ENCODE measurements at regions of chr1 and their contacts with region 1.

Region 1: DNA sequence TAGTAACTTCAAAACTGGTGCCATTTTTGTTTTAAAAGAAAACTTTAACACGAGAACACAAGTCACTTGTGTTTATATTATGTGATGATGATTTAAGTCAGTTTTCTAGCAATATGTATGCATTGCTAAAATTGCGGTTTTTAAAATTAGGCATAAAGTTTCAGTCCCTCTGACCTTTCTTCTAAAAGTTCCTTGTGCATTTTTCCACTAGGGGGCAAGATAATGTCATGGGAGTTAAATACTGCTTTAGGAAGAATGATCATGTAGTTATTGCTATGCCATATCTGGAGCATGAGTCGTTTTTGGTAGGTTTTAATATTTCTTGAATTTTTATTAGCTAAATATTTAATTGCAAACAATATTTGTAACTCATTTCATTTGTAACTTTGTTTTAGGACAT is 10.7 kb downstream of the CDC7 start:
- DNase-seq: no peak
- ATAC-seq: peak in 2 of 4 donors; percentile 46 to 72
- H3K4me3 ChIP-seq: no peak overlapping the region
- H3K27ac ChIP-seq: no peak overlapping the region
- H3K4me1 ChIP-seq: no peaks in the 10 kb centered on the region
- H3K27me3 ChIP-seq: no peaks in the 10 kb centered on the region
- CTCF ChIP-seq: peak; percentile 72

Region 2: GRCh38 chr1:91929250-91929649 is 417.9 kb after region 1 on chr1:
- intact Hi-C with region 1: loop called (anchors 1 to 5 kb)
- DNase-seq: no peak
- ATAC-seq: no peak
- H3K4me3 ChIP-seq: no peak overlapping the region
- H3K27ac ChIP-seq: no peak overlapping the region
- H3K4me1 ChIP-seq: no peaks in the 10 kb centered on the region
- H3K27me3 ChIP-seq: no peaks in the 10 kb centered on the region
- CTCF ChIP-seq: no peak

Region 3: DNA sequence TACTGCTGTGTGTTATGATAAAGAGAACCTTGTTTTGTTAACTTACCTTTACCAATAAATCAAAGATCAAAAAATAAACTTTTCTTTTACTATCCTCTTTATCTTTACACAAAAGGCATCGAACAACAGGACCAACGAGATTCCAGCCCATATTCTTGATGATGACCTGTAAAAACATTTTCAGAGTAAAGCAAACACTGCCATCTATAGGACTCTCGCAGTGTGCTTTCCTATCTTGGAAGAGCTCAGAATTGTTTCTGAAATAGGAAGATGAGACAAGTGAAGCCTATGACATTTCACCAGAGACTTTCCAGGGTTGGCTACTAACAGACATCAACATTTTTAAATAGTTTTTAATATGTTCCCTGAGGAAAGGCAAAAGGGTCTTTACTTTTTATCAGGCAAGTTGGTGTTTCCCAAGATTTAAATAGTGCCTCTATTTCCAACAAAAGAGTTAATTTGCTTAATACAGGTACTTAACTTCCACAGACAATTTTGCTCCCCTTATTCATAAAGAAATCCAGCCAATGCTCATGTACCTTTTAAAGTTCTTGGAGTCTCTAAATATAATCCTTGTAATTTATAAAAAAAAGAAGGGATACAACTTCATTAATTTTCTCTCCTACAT is 780.1 kb after region 1 on chr1:
- intact Hi-C with region 1: loop called in 1 of 2 experiments (anchors 5 kb)
- DNase-seq: no peak
- ATAC-seq: peak; percentile 55 to 78 (median 62)
- H3K4me3 ChIP-seq: no peak overlapping the region
- H3K27ac ChIP-seq: no peak overlapping the region
- H3K4me1 ChIP-seq: no peaks in the 10 kb centered on the region
- H3K27me3 ChIP-seq: no peaks in the 10 kb centered on the region
- CTCF ChIP-seq: peak; percentile 63

Measured in psoas muscle (tissue), 8 donors.